Activated B cell treated with CpG ODN at 0.5 μM for 24 hours (primary cell): ENCODE measurements at regions of chr18 and their contacts with region 1.

Region 1: DNA sequence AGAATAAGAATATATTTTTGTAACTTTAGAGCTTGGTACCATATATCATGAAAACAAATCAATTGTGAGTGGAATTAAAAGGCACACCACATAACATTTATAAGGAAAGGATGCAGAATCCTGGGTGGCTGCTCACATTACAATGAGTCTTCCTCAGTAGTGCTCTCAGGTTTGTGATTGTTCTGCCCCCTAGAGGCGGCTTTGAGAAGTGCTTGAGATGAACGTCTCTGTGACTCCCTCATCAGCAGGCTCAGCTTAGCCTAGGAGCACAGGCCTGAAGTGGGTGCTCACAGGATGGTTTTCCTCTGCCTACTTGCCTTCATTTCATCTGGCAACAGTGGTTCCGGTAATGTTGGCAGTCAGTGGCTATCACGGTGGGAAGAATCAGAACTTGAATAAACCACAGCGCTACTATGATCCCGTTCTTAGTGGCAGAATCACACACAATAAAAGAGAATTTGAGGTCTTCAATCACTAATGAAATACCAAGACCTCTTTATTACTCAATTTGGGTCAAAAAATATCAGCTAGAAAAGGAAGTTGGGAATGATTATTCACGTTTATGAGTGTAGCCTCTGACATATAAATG is 38.1 kb upstream of the B4GALT6 start:
- DNase-seq: peak; percentile 44
- ATAC-seq: peak; percentile 90
- H3K4me3 Mint-ChIP-seq: no peak overlapping the region
- H3K27ac Mint-ChIP-seq: no peak overlapping the region
- H3K4me1 Mint-ChIP-seq: peaks cover 7% of the 10 kb centered on the region
- H3K27me3 Mint-ChIP-seq: peaks cover 25% of the 10 kb centered on the region
- CTCF ChIP-seq: peak; percentile 45

Region 2: GRCh38 chr18:31555971-31556747 is 166.3 kb before region 1 on chr18:
- CTCF ChIA-PET with region 1: interaction called, 74 read pairs
- POLR2A ChIA-PET with region 1: no interaction called
- intact Hi-C with region 1: loop called (anchors 1 kb)
- DNase-seq: no peak
- ATAC-seq: peak; percentile 40
- H3K4me3 Mint-ChIP-seq: no peak overlapping the region
- H3K27ac Mint-ChIP-seq: no peak overlapping the region
- H3K4me1 Mint-ChIP-seq: no peaks in the 10 kb centered on the region
- H3K27me3 Mint-ChIP-seq: peaks cover 4% of the 10 kb centered on the region
- CTCF ChIP-seq: peak; percentile 31

Region 3: DNA sequence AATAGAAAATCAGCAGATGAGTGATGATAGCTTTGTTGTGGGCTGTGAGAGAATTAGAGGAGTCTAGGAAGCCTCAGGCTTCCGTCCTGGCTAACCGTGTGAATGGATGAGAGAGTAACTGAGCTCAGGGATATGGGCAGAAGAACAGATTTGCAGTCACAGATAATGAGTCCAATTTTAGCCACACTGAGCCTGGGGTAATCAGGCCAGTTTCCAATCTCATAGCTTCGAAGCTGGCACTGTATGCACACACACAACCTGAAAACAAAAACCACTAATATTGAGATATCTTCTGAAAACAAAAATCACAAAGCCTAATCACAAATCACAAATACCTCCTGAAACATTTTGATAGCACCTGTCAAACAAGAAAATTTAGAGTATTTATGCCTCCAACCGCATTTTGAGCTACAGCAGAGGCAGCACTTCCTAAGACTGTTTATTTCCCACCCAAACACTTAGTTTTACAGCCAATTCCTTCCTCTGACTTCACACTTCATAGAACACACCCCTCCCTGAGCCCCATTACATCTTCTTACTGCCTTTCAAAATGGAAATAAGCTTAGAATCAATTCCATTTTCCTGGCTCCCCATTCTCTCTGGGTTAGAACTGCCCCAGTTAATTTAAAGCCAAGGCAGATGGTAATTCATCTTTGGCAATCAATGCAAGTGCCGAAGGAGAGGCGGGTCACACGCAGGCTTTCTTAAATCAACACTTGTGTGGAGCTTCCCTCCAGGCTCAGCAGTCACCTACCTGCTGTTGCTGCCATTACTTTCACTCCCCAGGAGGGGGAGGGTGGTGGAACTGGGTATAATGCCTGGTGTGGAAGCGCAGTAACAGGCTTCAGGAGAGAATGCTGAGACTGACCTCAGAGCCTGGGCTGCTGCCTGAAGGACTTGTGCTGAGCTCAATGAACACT is 111.9 kb before region 1 on chr18:
- CTCF ChIA-PET with region 1: no interaction called
- POLR2A ChIA-PET with region 1: no interaction called
- intact Hi-C with region 1: loop called (anchors 5 kb)
- DNase-seq: no peak
- ATAC-seq: no peak
- H3K4me3 Mint-ChIP-seq: no peak overlapping the region
- H3K27ac Mint-ChIP-seq: no peak overlapping the region
- H3K4me1 Mint-ChIP-seq: no peaks in the 10 kb centered on the region
- H3K27me3 Mint-ChIP-seq: peaks cover 5% of the 10 kb centered on the region
- CTCF ChIP-seq: no peak

Region 4: DNA sequence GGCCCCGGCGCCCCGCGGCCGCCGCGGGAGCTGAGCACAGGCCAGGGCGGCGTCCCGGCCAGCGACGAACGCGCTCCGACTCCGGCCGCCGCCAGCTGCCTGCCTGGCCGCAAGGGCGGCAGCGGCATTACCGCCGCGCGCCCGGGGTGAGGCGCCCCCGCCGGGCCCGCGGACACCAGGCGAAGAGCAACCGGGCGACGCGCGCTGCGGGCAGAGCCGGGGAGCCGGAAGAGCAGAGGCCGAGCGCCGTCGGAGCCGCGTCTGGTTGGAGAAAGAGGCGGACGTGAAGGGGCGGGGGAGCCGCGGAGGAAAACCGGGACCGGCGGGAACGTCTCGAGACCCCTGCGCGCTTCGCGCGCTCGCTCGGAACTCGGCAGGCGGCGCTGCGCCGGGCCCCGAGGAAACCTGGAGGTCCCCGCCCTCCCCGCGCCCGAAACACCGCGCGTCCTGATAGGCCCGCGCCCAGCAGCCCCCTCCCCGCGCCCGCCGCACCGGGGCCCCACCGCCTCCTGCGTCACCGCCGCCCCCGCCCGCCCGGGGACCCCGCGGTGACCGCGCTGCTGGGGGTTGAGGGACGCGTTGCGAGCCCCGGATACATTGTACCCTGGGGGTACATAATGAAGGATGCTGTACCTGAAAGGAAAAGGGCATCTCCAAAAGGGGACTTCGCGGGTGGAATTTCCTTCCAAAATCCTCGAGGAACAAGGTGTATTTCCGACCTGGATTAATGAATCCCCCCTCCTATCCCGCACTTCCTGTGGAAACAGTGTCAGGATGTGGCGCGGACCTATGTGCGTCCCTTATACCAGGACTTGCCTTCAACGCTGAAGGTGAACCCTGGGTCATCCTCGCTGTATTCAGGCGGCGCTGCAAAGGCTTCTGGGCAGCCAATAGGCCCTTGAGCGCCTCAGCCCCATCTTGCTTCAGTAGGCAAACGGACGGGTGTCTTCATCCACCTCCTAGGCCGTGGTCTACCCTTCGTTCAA is 37.1 kb before region 1 on chr18:
- CTCF ChIA-PET with region 1: interaction called, 6 read pairs
- POLR2A ChIA-PET with region 1: no interaction called
- intact Hi-C with region 1: loop called (anchors 5 kb)
- DNase-seq: peak; percentile 56
- ATAC-seq: peak; percentile 80
- H3K4me3 Mint-ChIP-seq: peak overlapping the region; percentile 82
- H3K27ac Mint-ChIP-seq: peak overlapping the region; percentile 56
- H3K4me1 Mint-ChIP-seq: peaks cover 17% of the 10 kb centered on the region
- H3K27me3 Mint-ChIP-seq: peaks cover 21% of the 10 kb centered on the region
- CTCF ChIP-seq: no peak

Region 5: GRCh38 chr18:31767629-31768028 is 45.2 kb after region 1 on chr18:
- CTCF ChIA-PET with region 1: no interaction called
- POLR2A ChIA-PET with region 1: no interaction called
- intact Hi-C with region 1: no loop called
- DNase-seq: no peak
- ATAC-seq: no peak
- H3K4me3 Mint-ChIP-seq: no peak overlapping the region
- H3K27ac Mint-ChIP-seq: no peak overlapping the region
- H3K4me1 Mint-ChIP-seq: no peaks in the 10 kb centered on the region
- H3K27me3 Mint-ChIP-seq: peaks cover 1% of the 10 kb centered on the region
- CTCF ChIP-seq: no peak

Region 6: GRCh38 chr18:31876707-31877106 is 154.2 kb after region 1 on chr18:
- CTCF ChIA-PET with region 1: no interaction called
- POLR2A ChIA-PET with region 1: no interaction called
- intact Hi-C with region 1: no loop called
- DNase-seq: no peak
- ATAC-seq: no peak
- H3K4me3 Mint-ChIP-seq: no peak overlapping the region
- H3K27ac Mint-ChIP-seq: no peak overlapping the region
- H3K4me1 Mint-ChIP-seq: peaks cover 7% of the 10 kb centered on the region
- H3K27me3 Mint-ChIP-seq: no peaks in the 10 kb centered on the region
- CTCF ChIP-seq: no peak